ENCODE measurements at regions of chr17 and their contacts with region 1.

Region 1: DNA sequence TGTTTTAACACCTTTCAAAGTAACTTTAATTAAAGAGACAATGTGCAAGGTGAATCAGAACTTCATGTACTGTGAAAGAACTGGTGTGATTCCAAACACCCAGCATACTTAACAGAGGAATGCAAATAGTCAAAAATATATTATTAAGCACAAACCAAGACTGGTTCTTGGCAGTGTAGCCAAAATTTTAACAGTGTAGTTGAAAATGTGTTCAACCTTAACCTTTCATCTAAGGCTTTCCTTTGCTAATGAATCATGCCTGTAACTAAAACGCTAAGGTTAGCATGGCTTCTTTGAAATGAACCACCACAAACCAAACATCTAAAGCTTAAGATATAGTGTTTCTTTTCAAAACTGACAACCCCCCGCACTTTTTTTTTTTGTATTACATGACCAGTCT is 146.3 kb upstream of the AXIN2 start:
- DNase-seq: no peak
- ATAC-seq: no peak
- H3K4me3 ChIP-seq: no peak overlapping the region
- H3K27ac ChIP-seq: no peak overlapping the region
- H3K4me1 ChIP-seq: no peaks in the 10 kb centered on the region
- H3K27me3 ChIP-seq: no peaks in the 10 kb centered on the region

Region 2: DNA sequence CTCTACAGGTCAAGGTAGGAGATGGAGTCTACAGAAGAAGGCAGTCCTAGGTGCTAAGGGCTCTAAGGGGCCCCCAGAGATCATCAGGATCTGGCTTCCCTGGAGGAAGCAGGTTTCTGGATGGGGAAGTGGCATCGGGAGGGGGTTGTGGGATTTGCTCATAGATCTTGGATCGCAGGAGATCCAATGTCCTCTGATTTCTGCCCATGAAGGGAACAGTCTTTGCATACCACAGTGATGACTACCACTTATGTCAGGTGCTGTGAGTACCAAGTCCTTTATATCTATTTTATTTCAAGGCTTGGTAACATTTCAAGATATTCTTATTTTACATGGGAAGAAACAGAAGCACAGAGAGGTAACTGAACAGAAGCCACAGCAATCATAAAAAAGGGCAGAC is 406.6 kb before region 1 on chr17:
- intact Hi-C with region 1: no loop called
- DNase-seq: no peak
- ATAC-seq: no peak
- H3K4me3 ChIP-seq: no peak overlapping the region
- H3K27ac ChIP-seq: no peak overlapping the region
- H3K4me1 ChIP-seq: no peaks in the 10 kb centered on the region
- H3K27me3 ChIP-seq: no peaks in the 10 kb centered on the region

Region 3: DNA sequence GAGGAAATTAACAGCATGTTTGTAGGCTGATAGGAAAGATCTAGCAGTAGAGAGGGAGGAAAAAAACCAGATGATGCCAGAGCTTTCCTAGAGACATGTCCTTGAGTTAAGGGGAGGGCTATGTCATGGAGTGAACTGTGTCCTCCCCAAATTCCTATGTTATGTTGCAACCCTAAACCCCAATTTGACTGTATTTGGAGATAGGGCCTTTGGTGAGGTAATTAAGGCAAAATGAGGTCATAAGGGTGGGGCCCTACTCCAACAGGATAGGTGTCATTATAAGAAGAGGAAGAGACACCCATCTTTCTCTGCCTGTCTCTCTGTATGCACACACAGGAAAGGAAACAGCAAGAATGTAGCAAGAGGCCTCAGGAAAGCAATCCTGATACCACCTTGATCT is 49.0 kb after region 1 on chr17:
- intact Hi-C with region 1: loop called in 1 of 2 experiments (anchors 5 kb)
- DNase-seq: no peak
- ATAC-seq: no peak
- H3K4me3 ChIP-seq: no peak overlapping the region
- H3K27ac ChIP-seq: no peak overlapping the region
- H3K4me1 ChIP-seq: no peaks in the 10 kb centered on the region
- H3K27me3 ChIP-seq: no peaks in the 10 kb centered on the region

Region 4: GRCh38 chr17:65966072-65966695 is 258.4 kb after region 1 on chr17:
- intact Hi-C with region 1: no loop called
- DNase-seq: no peak
- ATAC-seq: no peak
- H3K4me3 ChIP-seq: no peak overlapping the region
- H3K27ac ChIP-seq: no peak overlapping the region
- H3K4me1 ChIP-seq: peaks cover 0 to 2% of the 10 kb centered on the region in 2 donors
- H3K27me3 ChIP-seq: no peaks in the 10 kb centered on the region